HepG2 (cell line): ENCODE measurements at regions of chr2 and their contacts with region 1.

Region 1: GRCh38 chr2:240412211-240412861 is 23.1 kb upstream of the GPC1 start:
- DNase-seq: no peak
- ATAC-seq: peak; percentile 54
- H3K4me3 ChIP-seq: no peak overlapping the region
- H3K27ac ChIP-seq: no peak overlapping the region
- H3K4me1 ChIP-seq: no peaks in the 10 kb centered on the region
- H3K27me3 ChIP-seq: peaks cover 17 to 56% of the 10 kb centered on the region in 2 experiments; a peak in 4 of 5 replicates
- CTCF ChIP-seq: no peak
- EP300 ChIP-seq: no peak
- POLR2A ChIP-seq: no peak
- RAD21 ChIP-seq: no peak

Region 2: DNA sequence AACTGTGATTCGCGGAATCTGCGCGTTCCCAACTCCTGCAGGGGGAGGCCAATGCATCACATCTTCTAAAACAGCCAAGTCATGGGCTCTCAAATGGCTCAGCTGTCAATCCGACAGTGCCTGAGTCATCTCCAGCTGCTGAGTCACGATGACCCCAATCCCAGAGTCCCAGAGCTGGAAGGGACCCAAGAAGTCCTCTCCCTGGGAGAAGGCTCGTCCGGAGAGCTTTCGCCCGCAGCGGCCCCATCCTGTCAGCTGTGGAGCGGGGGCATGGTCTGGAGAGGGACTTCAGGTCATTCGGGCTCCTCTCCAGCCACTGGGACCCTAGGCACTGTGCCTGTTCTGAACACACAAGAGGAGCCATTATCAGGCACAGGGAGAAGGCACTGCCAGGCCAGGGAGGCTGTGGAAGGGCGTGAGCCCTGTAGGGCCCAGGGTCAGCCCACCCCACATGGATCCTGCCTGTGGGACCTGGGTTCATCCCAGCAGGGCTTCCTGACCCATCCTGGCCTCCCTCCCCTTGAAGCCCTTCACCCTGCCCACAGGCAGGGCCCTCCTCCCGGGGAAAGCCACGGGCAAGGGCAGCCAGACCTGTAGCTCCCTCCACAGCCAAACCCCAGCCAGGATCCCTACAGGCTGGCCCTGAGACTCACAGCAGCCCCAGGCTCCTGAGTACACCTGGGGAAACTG is 24.5 kb before region 1 on chr2:
- CTCF ChIA-PET with region 1: no interaction called
- POLR2A ChIA-PET with region 1: no interaction called
- in situ Hi-C with region 1: no loop called
- intact Hi-C with region 1: loop called (anchors 1 kb)
- DNase-seq: peak; percentile 62
- ATAC-seq: peak; percentile 4; the same call in 1 of the 3 replicates
- H3K4me3 ChIP-seq: no peak overlapping the region
- H3K27ac ChIP-seq: no peak overlapping the region
- H3K4me1 ChIP-seq: 0 out of 2 replicates have a peak, but pooled peaks cover 8% of the 10 kb centered on the region
- H3K27me3 ChIP-seq: peaks cover 16 to 45% of the 10 kb centered on the region in 2 experiments
- CTCF ChIP-seq: no peak
- EP300 ChIP-seq: no peak
- POLR2A ChIP-seq: no peak
- RAD21 ChIP-seq: no peak

Region 3: GRCh38 chr2:240397924-240398645 is 14.3 kb before region 1 on chr2:
- CTCF ChIA-PET with region 1: no interaction called
- POLR2A ChIA-PET with region 1: no interaction called
- in situ Hi-C with region 1: no loop called
- intact Hi-C with region 1: no loop called
- DNase-seq: no peak
- ATAC-seq: peak; percentile 34; the same call in 2 of the 3 replicates
- H3K4me3 ChIP-seq: no peak overlapping the region
- H3K27ac ChIP-seq: no peak overlapping the region
- H3K4me1 ChIP-seq: no peaks in the 10 kb centered on the region
- H3K27me3 ChIP-seq: peaks cover 35 to 96% of the 10 kb centered on the region in 2 experiments
- CTCF ChIP-seq: no peak
- EP300 ChIP-seq: no peak
- POLR2A ChIP-seq: no peak
- RAD21 ChIP-seq: no peak